CD4-positive, alpha-beta T cell (primary cell): ENCODE measurements at regions of chr9 and their contacts with region 1.

Region 1: DNA sequence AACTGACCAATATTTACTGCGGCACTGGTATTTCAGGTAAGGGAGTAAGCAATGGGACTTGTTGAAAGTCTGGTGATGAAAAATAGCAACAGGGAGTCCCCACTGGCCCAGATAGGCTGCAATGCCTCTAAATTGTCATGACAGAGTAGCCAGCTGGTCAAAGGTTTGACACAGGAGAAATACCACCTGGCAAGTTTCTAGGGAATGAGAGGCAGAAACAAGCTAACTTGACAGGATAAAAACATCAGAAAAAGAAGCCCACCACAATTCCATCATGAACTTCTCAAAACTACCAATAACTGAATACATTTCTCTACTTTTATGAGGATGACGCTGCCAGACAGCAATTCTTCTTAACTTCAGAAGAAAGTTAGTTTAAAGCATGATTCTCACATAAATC is 99.8 kb downstream of the STRBP start:
- DNase-seq: no peak
- ATAC-seq: no peak
- H3K4me3 ChIP-seq: no peak overlapping the region
- H3K4me3 Mint-ChIP-seq: no peak overlapping the region
- H3K27ac ChIP-seq: no peak overlapping the region
- H3K27ac Mint-ChIP-seq: no peak overlapping the region
- H3K4me1 ChIP-seq: no peaks in the 10 kb centered on the region
- H3K4me1 Mint-ChIP-seq: no peaks in the 10 kb centered on the region
- H3K27me3 ChIP-seq: no peaks in the 10 kb centered on the region
- H3K27me3 Mint-ChIP-seq: no peaks in the 10 kb centered on the region
- CTCF ChIP-seq: no peak

Region 2: DNA sequence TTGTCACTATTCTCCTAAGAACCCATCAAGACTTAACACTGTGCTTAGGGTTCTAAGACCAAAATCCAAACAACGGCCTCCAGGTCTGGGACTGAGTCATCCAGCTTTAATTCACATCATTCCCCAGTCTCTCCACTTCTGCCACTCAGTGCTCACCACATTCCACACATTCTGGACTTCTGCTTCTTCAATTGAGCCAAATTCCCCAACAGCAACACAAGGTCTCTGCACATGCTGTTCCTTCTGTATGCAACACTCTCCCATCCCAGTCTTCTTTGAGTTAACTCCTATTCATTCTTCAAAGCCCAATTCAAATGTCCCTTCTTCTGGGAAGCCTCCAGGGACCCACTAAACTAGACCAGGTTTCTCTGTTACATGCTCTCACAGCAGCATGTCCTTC is 37.3 kb before region 1 on chr9:
- CTCF ChIA-PET with region 1: no interaction called
- POLR2A ChIA-PET with region 1: no interaction called
- intact Hi-C with region 1: loop called in 1 of 2 experiments (anchors 5 kb)
- DNase-seq: no peak
- ATAC-seq: no peak
- H3K4me3 ChIP-seq: no peak overlapping the region
- H3K4me3 Mint-ChIP-seq: no peak overlapping the region
- H3K27ac ChIP-seq: no peak overlapping the region
- H3K27ac Mint-ChIP-seq: no peak overlapping the region
- H3K4me1 ChIP-seq: no peaks in the 10 kb centered on the region
- H3K4me1 Mint-ChIP-seq: no peaks in the 10 kb centered on the region
- H3K27me3 ChIP-seq: no peaks in the 10 kb centered on the region
- H3K27me3 Mint-ChIP-seq: no peaks in the 10 kb centered on the region
- CTCF ChIP-seq: no peak